Panc1 (cell line): ENCODE measurements at regions of chr1 and their contacts with region 1.

Region 1: GRCh38 chr1:236759252-236759859 is 35.7 kb upstream of the MTR start:
- DNase-seq: peak; percentile 45
- ATAC-seq: peak; percentile 64; the same call in 1 of the 2 replicates
- H3K4me3 ChIP-seq: no peak overlapping the region
- H3K27ac ChIP-seq: no peak overlapping the region
- H3K4me1 ChIP-seq: no peaks in the 10 kb centered on the region; the same call in 1 of the 2 replicates
- H3K27me3 ChIP-seq: no peaks in the 10 kb centered on the region
- CTCF ChIP-seq: peak; percentile 81

Region 2: GRCh38 chr1:236854602-236854978 is 95.2 kb after region 1 on chr1:
- CTCF ChIA-PET with region 1: no interaction called
- POLR2A ChIA-PET with region 1: no interaction called
- in situ Hi-C with region 1: no loop called
- intact Hi-C with region 1: no loop called
- DNase-seq: no peak
- ATAC-seq: no peak
- H3K4me3 ChIP-seq: no peak overlapping the region
- H3K27ac ChIP-seq: no peak overlapping the region
- H3K4me1 ChIP-seq: no peaks in the 10 kb centered on the region
- H3K27me3 ChIP-seq: no peaks in the 10 kb centered on the region
- CTCF ChIP-seq: no peak

Region 3: DNA sequence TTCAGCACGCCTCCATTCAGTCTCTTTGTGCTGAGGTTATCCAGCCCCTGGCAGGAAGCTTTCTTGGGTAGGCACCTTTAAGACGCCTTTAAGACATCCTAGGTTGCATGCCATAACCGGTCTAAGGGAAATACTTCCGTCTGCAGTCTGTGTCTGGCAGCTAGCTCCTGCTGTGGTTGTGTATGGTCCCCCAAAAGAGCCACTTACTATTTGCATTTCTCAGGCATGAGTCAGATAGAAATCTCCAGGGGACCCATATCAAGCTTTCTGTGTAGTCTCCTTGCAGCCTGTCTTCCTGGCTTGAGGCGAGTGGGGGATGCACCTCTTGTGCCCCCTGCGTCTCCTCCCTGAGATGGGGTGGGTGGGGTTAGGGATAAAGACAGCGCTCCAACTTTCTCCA is 272.7 kb after region 1 on chr1:
- CTCF ChIA-PET with region 1: no interaction called
- POLR2A ChIA-PET with region 1: interaction called, 11 read pairs
- in situ Hi-C with region 1: no loop called
- intact Hi-C with region 1: no loop called
- DNase-seq: no peak
- ATAC-seq: peak; percentile 89
- H3K4me3 ChIP-seq: no peak overlapping the region
- H3K27ac ChIP-seq: no peak overlapping the region
- H3K4me1 ChIP-seq: peaks cover 11% of the 10 kb centered on the region
- H3K27me3 ChIP-seq: no peaks in the 10 kb centered on the region
- CTCF ChIP-seq: no peak

Region 4: DNA sequence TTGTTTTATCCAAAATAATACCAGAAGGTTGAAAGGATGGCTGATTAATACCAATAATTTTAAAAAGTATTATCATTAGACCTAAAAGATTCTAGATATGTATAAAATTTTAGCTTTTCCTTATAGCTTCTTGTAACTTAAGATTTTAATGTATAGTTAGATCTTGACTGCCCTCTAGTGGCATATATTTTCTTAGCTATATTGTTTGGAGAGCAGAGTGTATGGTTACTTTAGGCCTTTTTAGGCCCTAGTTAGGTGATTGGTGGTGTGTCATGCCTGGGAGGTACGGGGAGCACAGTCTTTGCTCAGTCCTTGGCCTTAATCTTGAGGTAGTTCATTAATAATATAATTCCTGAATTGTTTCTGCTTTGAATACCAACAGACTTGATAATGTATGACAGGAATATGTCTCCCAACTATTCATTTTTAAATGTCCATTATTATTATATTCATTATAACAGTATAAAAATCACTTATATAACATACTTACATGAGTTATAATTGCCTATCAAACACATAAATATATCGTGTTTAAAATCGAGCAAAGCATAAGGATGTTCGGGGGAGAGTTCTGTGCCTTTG is 803.0 kb after region 1 on chr1:
- CTCF ChIA-PET with region 1: no interaction called
- POLR2A ChIA-PET with region 1: no interaction called
- in situ Hi-C with region 1: no loop called
- intact Hi-C with region 1: loop called (anchors 10 kb)
- DNase-seq: peak; percentile 32
- ATAC-seq: peak; percentile 86
- H3K4me3 ChIP-seq: no peak overlapping the region
- H3K27ac ChIP-seq: no peak overlapping the region
- H3K4me1 ChIP-seq: no peaks in the 10 kb centered on the region
- H3K27me3 ChIP-seq: no peaks in the 10 kb centered on the region
- CTCF ChIP-seq: peak; percentile 68